AG04450 (cell line): ENCODE measurements at regions of chr4 and their contacts with region 1.

Region 1: GRCh38 chr4:26860157-26860921 is at the start of gene STIM2:
- DNase-seq: peak; percentile 93
- H3K4me3 ChIP-seq: peak within 1 kb of the TSS; percentile 83
- H3K27ac ChIP-seq: peak within 1 kb of the TSS; percentile 54
- H3K27me3 ChIP-seq: no peaks in the 10 kb centered on the region
- CTCF ChIP-seq: peak; percentile 54
- polyA plus RNA-seq, gene STIM2: 23.9 and 26.8 TPM in 2 replicates

Region 2: GRCh38 chr4:26749867-26750266 is 110.5 kb before region 1 on chr4:
- CTCF ChIA-PET with region 1: no interaction called
- POLR2A ChIA-PET with region 1: interaction called, 11 read pairs
- DNase-seq: no peak
- H3K4me3 ChIP-seq: no peak overlapping the region
- H3K27ac ChIP-seq: no peak overlapping the region
- H3K27me3 ChIP-seq: no peaks in the 10 kb centered on the region
- CTCF ChIP-seq: no peak

Region 3: GRCh38 chr4:27010334-27010940 is 150.1 kb after region 1 on chr4:
- CTCF ChIA-PET with region 1: interaction called, 17 read pairs
- POLR2A ChIA-PET with region 1: interaction called, 13 read pairs
- DNase-seq: no peak
- H3K4me3 ChIP-seq: no peak overlapping the region
- H3K27ac ChIP-seq: no peak overlapping the region
- H3K27me3 ChIP-seq: no peaks in the 10 kb centered on the region
- CTCF ChIP-seq: peak; percentile 87

Region 4: GRCh38 chr4:27027428-27027827 is 167.1 kb after region 1 on chr4:
- CTCF ChIA-PET with region 1: no interaction called
- POLR2A ChIA-PET with region 1: no interaction called
- DNase-seq: no peak
- H3K4me3 ChIP-seq: no peak overlapping the region
- H3K27ac ChIP-seq: no peak overlapping the region
- H3K27me3 ChIP-seq: no peaks in the 10 kb centered on the region
- CTCF ChIP-seq: no peak